ENCODE measurements at regions of chr15 and their contacts with region 1.

Region 1: DNA sequence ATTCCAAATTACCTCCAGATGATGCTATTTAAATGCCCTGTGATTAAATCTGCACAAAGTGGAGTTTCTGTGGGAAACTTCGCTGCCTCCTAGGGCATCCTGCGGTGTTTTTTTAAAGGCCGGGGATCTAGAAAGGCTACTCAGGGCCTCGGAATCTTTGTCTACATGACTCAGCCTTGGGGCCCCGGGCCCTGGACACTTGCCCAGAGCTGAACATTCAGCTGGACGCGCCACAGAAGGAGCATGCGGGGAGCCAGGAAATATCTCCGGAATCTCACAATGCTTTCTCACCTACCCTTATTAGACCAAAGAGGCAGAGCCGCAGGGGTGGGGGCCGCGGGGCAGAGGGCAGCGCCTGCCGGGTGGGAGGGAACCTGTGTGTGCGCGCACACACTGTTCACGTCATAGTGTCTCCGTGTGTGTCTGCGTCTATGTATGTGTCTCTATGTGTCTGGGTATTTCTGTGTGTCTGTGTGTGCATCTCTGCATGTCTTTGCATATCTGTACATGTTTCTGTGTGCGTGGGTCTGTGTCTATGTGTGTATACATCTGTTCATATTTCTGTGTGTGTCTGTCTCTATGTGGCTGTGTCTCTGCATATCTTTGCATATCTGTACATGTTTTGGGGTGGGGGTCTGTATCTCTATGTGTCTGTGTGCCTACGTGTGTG is 145.4 kb upstream of the TPM1 start:
- DNase-seq: peak; percentile 93 to 97
- H3K4me3 ChIP-seq: peak overlapping the region; percentile 47; the same call in 1 of the 2 replicates
- H3K27ac ChIP-seq: peak overlapping the region; percentile 100
- H3K4me1 ChIP-seq: peaks cover 81% of the 10 kb centered on the region
- H3K27me3 ChIP-seq: no peaks in the 10 kb centered on the region
- CTCF ChIP-seq: no peak

Region 2: GRCh38 chr15:62857411-62857853 is 39.7 kb before region 1 on chr15:
- CTCF ChIA-PET with region 1: interaction called, 5 read pairs
- POLR2A ChIA-PET with region 1: interaction called, 4 read pairs
- intact Hi-C with region 1: loop called (anchors 1 kb)
- DNase-seq: peak; percentile 85 to 93
- H3K4me3 ChIP-seq: peak overlapping the region; percentile 38; the same call in 1 of the 2 replicates
- H3K27ac ChIP-seq: peak overlapping the region; percentile 99
- H3K4me1 ChIP-seq: peaks cover 69% of the 10 kb centered on the region
- H3K27me3 ChIP-seq: no peaks in the 10 kb centered on the region
- CTCF ChIP-seq: no peak

Region 3: GRCh38 chr15:62928242-62928995 is 31.3 kb after region 1 on chr15:
- CTCF ChIA-PET with region 1: no interaction called
- POLR2A ChIA-PET with region 1: no interaction called
- intact Hi-C with region 1: no loop called
- DNase-seq: peak in 1 of 2 experiments; percentile 39
- H3K4me3 ChIP-seq: no peak overlapping the region
- H3K27ac ChIP-seq: peak overlapping the region; percentile 80
- H3K4me1 ChIP-seq: peaks cover 23% of the 10 kb centered on the region
- H3K27me3 ChIP-seq: no peaks in the 10 kb centered on the region
- CTCF ChIP-seq: no peak

Region 4: GRCh38 chr15:63019539-63020109 is 122.5 kb after region 1 on chr15:
- CTCF ChIA-PET with region 1: no interaction called
- POLR2A ChIA-PET with region 1: no interaction called
- intact Hi-C with region 1: loop called (anchors 1 kb)
- DNase-seq: peak; percentile 91 to 94
- H3K4me3 ChIP-seq: no peak overlapping the region; the same call in 1 of the 2 replicates
- H3K27ac ChIP-seq: peak overlapping the region; percentile 75
- H3K4me1 ChIP-seq: peaks cover 51% of the 10 kb centered on the region
- H3K27me3 ChIP-seq: no peaks in the 10 kb centered on the region
- CTCF ChIP-seq: no peak

Region 5: GRCh38 chr15:63093486-63094205 is 196.5 kb after region 1 on chr15:
- CTCF ChIA-PET with region 1: no interaction called
- POLR2A ChIA-PET with region 1: no interaction called
- intact Hi-C with region 1: loop called (anchors 5 kb)
- DNase-seq: peak in 1 of 2 experiments; percentile 70
- H3K4me3 ChIP-seq: no peak overlapping the region
- H3K27ac ChIP-seq: no peak overlapping the region
- H3K4me1 ChIP-seq: no peaks in the 10 kb centered on the region
- H3K27me3 ChIP-seq: no peaks in the 10 kb centered on the region
- CTCF ChIP-seq: peak; percentile 78

Measured in PC-9 (cell line).